ENCODE measurements at regions of chr16 and their contacts with region 1.

Region 1: GRCh38 chr16:1054660-1055556 is 17.6 kb upstream of the SSTR5 start:
- DNase-seq: peak; percentile 72
- H3K4me3 ChIP-seq: no peak overlapping the region
- H3K27ac ChIP-seq: no peak overlapping the region
- H3K4me1 ChIP-seq: no peaks in the 10 kb centered on the region
- H3K27me3 ChIP-seq: no peaks in the 10 kb centered on the region
- CTCF ChIP-seq: peak; percentile 72 to 85 (median 81)
- POLR2A ChIP-seq: no peak

Region 2: DNA sequence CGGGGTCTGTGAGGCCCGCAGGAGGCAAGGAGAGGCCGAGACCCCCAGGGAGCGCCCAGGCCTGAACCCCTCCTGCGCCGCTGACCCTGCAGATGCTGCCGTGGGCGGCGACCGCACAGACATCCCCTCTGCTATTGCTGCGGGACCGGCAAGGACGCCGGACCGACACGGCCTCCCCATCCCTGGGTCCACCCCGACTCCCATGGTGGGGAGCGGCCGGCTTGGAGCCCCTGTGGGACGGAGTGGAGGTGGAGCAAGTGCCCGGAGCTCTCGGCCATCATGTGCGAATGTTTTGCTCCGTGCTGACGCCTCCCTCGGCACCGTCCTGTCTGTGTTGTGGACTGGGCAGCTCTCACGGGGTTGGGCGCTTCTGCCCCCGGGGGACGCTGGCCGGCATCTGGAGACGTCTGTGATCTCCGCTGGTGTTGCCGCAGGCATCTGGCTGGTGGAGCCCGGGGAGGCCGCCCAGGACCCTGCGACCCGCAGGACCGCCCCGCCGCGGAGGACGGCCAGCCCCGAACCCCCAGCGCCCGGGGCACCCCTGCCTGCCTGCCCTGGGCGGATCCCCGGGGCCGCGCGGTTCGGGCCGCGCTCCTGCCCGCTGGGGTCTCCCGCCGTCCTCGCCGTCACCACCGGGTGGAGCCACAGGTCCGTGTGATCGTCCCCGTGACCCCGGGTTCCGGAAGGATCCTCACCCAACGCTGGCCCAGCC is 241.5 kb before region 1 on chr16:
- intact Hi-C with region 1: loop called (anchors 10 kb)
- DNase-seq: peak; percentile 50
- H3K4me3 ChIP-seq: peak overlapping the region in 1 of 2 donors; percentile 17
- H3K27ac ChIP-seq: no peak overlapping the region
- H3K4me1 ChIP-seq: peaks cover 3% of the 10 kb centered on the region
- H3K27me3 ChIP-seq: no peaks in the 10 kb centered on the region
- CTCF ChIP-seq: peak; percentile 53 to 61 (median 55)
- POLR2A ChIP-seq: no peak

Region 3: GRCh38 chr16:1097800-1098199 is 42.9 kb after region 1 on chr16:
- intact Hi-C with region 1: loop called (anchors 5 kb)
- DNase-seq: no peak
- H3K4me3 ChIP-seq: no peak overlapping the region
- H3K27ac ChIP-seq: no peak overlapping the region
- H3K4me1 ChIP-seq: peaks cover 7% of the 10 kb centered on the region
- H3K27me3 ChIP-seq: no peaks in the 10 kb centered on the region
- CTCF ChIP-seq: no peak
- POLR2A ChIP-seq: no peak

Measured in testis (tissue), 5 donors.